Endothelial cell of umbilical vein (primary cell): ENCODE measurements at regions of chr1 and their contacts with region 1.

Region 1: DNA sequence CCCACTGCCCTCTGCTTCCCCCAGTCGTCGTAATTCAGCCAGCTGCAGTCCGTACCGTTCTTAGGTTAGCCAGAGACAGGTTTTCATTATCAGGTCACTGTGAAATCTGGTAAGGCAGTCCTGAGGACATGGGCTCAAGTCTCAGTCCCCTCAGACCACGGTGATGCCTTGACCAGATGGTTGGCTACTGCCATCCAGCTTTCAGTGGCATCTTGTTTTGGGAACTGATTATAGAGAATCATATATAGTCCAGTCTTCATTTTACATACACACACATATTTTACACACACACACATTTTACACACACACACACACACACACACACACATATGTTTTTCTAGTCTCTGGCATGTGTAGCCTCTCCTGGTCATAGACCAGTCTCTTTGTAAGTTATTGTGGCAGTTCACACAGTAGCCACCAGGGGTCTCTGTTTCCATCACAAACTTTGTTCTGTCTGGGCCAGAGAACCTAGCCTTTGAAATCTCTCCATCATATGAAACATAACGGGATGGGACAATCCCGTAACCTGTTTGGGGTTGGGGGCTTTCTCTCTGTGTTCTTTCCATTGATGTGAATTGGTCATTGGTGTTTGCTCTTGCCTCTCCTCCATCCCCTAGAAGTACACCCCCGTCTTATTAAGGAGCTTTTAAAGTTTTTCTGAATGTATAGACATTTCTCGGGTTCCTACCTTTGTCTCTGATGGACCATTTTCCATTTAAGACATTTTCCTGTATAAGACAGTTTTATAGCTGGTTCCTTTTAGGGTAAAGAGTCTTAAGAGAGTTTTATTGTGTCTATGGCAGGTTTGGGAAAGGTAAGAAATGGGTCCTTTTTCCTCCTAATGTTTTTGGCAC is 8.4 kb upstream of the IKBKE start:
- DNase-seq: peak; percentile 79
- H3K4me3 ChIP-seq: no peak overlapping the region
- H3K27ac ChIP-seq: no peak overlapping the region
- H3K4me1 ChIP-seq: peaks cover 20% of the 10 kb centered on the region
- H3K27me3 ChIP-seq: peaks cover 0 to 1% of the 10 kb centered on the region in 2 experiments
- CTCF ChIP-seq: peak; percentile 76 to 86
- POLR2A ChIP-seq: no peak

Region 2: DNA sequence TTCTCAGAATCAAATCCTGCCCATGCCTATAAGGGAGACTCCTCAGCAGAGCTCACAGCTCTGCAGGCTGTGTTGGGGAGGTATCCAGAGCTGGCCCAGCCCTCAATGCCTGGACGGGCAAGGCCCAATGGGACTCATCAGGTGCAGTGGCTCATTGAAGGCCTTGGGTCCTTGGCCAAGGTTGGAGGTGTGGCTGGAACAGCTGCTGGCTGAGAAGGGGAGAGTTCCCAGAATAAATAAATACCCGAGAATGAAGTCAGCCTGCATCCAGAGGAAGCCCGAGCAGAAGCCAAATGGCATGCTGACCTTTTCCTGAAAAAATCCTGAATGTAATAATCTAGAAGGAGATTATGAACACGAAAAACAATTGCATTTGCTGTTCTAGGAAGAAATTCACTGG is 16.7 kb before region 1 on chr1:
- CTCF ChIA-PET with region 1: interaction called, 10 read pairs
- POLR2A ChIA-PET with region 1: no interaction called
- dilution Hi-C with region 1: no loop called
- intact Hi-C with region 1: no loop called
- DNase-seq: peak; percentile 87
- H3K4me3 ChIP-seq: no peak overlapping the region
- H3K27ac ChIP-seq: no peak overlapping the region
- H3K4me1 ChIP-seq: peaks cover 21% of the 10 kb centered on the region
- H3K27me3 ChIP-seq: no peaks in the 10 kb centered on the region
- CTCF ChIP-seq: no peak
- POLR2A ChIP-seq: no peak